T-cell (primary cell): ENCODE measurements at regions of chr1 and their contacts with region 1.

Region 1: DNA sequence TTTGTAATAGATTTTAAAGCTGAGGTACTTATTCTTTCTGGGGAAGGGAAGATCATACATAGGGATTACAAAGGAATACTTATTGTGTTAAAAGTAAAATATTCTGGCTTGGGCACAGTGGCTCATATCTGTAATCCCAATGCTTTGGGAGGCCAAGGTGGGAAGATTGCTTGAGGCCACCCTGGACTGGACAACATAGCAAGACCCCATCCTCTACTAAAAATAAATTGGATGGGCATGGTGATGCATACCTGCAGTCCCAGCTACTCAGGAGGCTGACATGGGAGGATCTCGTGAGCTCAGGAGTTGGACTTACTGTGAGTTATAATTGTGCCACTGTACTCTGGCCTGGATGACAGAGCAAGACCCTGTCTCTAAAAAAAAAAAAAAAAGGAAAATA is 27.6 kb downstream of the GABPB2 start:
- DNase-seq: no peak
- ATAC-seq: no peak
- H3K4me3 ChIP-seq: no peak overlapping the region
- H3K4me3 Mint-ChIP-seq: no peak overlapping the region
- H3K27ac ChIP-seq: no peak overlapping the region
- H3K27ac Mint-ChIP-seq: no peak overlapping the region
- H3K4me1 ChIP-seq: no peaks in the 10 kb centered on the region
- H3K4me1 Mint-ChIP-seq: no peaks in the 10 kb centered on the region
- H3K27me3 ChIP-seq: no peaks in the 10 kb centered on the region
- H3K27me3 Mint-ChIP-seq: no peaks in the 10 kb centered on the region

Region 2: DNA sequence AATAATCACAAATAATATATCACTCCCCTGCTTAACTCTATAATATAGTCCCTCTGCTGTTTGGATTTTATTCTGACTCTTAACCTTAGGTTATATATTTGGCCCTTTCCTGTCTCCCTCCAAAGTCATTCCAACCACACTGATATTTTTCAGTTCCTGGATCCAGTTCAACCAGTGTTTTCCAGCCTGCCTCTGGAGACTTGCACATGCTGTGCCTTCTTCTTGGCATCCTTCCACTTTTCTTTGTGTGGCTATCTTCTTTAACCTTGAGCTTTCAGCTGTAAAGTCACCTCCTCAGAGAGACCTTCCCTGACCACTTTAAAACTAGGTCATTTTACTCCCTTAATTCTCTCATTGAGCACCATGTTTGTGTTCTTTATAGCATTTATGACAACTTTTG is 142.8 kb before region 1 on chr1:
- CTCF ChIA-PET with region 1: no interaction called
- POLR2A ChIA-PET with region 1: no interaction called
- DNase-seq: no peak
- ATAC-seq: no peak
- H3K4me3 ChIP-seq: no peak overlapping the region
- H3K4me3 Mint-ChIP-seq: no peak overlapping the region
- H3K27ac ChIP-seq: no peak overlapping the region
- H3K27ac Mint-ChIP-seq: peak overlapping the region; percentile 8 to 19
- H3K4me1 ChIP-seq: no peaks in the 10 kb centered on the region
- H3K4me1 Mint-ChIP-seq: no peaks in the 10 kb centered on the region
- H3K27me3 ChIP-seq: no peaks in the 10 kb centered on the region
- H3K27me3 Mint-ChIP-seq: no peaks in the 10 kb centered on the region

Region 3: GRCh38 chr1:151024540-151025146 is 73.5 kb before region 1 on chr1:
- CTCF ChIA-PET with region 1: interaction called, 6 to 23 read pairs
- POLR2A ChIA-PET with region 1: interaction called in 1 of 2 experiments, 11 read pairs
- DNase-seq: peak; percentile 72 to 92 (median 85)
- ATAC-seq: peak; percentile 99 to 100 (median 100)
- H3K4me3 ChIP-seq: no peak overlapping the region
- H3K4me3 Mint-ChIP-seq: peak overlapping the region in 2 of 3 donors; percentile 23 to 43
- H3K27ac ChIP-seq: no peak overlapping the region
- H3K27ac Mint-ChIP-seq: peak overlapping the region; percentile 31 to 36
- H3K4me1 ChIP-seq: peaks cover 0 to 7% of the 10 kb centered on the region in 2 experiments
- H3K4me1 Mint-ChIP-seq: peaks cover 6 to 16% (median 8%) of the 10 kb centered on the region in 3 donors
- H3K27me3 ChIP-seq: no peaks in the 10 kb centered on the region
- H3K27me3 Mint-ChIP-seq: no peaks in the 10 kb centered on the region

Region 4: GRCh38 chr1:151156515-151156819 is 58.3 kb after region 1 on chr1 and contains the start of gene TNFAIP8L2:
- CTCF ChIA-PET with region 1: interaction called, 29 to 144 read pairs
- POLR2A ChIA-PET with region 1: no interaction called
- DNase-seq: peak; percentile 37 to 82 (median 67)
- ATAC-seq: peak; percentile 81 to 88 (median 85)
- H3K4me3 ChIP-seq: peak within 1 kb of the TSS; percentile 89 to 97
- H3K4me3 Mint-ChIP-seq: peak within 1 kb of the TSS; percentile 99 to 100 (median 100)
- H3K27ac ChIP-seq: peak within 1 kb of the TSS; percentile 68
- H3K27ac Mint-ChIP-seq: peak within 1 kb of the TSS; percentile 97 to 100
- H3K4me1 ChIP-seq: peaks cover 35 to 49% of the 10 kb centered on the region in 2 experiments
- H3K4me1 Mint-ChIP-seq: peaks cover 44 to 60% (median 57%) of the 10 kb centered on the region in 3 donors
- H3K27me3 ChIP-seq: no peaks in the 10 kb centered on the region
- H3K27me3 Mint-ChIP-seq: no peaks in the 10 kb centered on the region
- total RNA-seq, gene TNFAIP8L2: 3.7 to 41.2 (median 38.8) TPM

Region 5: GRCh38 chr1:151254217-151255213 is 156.4 kb after region 1 on chr1 and contains the start of gene PSMD4:
- CTCF ChIA-PET with region 1: interaction called, 5 to 19 read pairs
- POLR2A ChIA-PET with region 1: interaction called, 3 to 8 read pairs
- DNase-seq: peak; percentile 78 to 97 (median 93)
- ATAC-seq: peak; percentile 93 to 96 (median 94)
- H3K4me3 ChIP-seq: peak within 1 kb of the TSS; percentile 82 to 92
- H3K4me3 Mint-ChIP-seq: peak within 1 kb of the TSS; percentile 83 to 91 (median 88)
- H3K27ac ChIP-seq: peak within 1 kb of the TSS; percentile 69
- H3K27ac Mint-ChIP-seq: peak within 1 kb of the TSS; percentile 89
- H3K4me1 ChIP-seq: peaks cover 6 to 29% of the 10 kb centered on the region in 2 experiments
- H3K4me1 Mint-ChIP-seq: peaks cover 27 to 39% (median 36%) of the 10 kb centered on the region in 3 donors
- H3K27me3 ChIP-seq: no peaks in the 10 kb centered on the region
- H3K27me3 Mint-ChIP-seq: no peaks in the 10 kb centered on the region
- total RNA-seq, gene PSMD4: 68.1 to 150 (median 133) TPM